ENCODE measurements at regions of chr15 and their contacts with region 1.

Region 1: DNA sequence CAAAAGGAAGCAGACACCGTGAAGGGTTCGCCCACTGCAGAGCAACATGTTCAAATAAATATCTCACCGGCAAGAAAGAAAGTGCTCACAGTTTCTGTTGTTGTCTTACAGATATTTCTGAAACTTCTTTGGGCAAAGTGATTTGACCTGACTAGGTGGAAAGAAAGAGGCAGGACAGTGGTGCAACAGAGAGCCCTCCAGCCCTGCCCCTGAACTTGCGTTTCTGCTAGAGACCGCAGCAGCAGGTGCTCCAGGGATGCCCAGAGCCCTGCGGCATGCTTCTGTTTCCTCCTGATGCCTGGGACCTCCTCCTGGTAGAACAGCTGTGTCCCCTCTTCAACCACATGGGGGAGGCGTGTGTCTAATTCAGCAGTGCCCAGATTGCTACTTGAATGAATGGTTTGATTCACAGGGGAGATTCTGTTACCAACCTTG is 123.4 kb downstream of the ATP10A start:
- H3K4me3 Mint-ChIP-seq: no peak overlapping the region
- H3K27ac Mint-ChIP-seq: no peak overlapping the region
- H3K4me1 Mint-ChIP-seq: peaks cover 30% of the 10 kb centered on the region
- H3K27me3 Mint-ChIP-seq: peaks cover 22% of the 10 kb centered on the region

Region 2: DNA sequence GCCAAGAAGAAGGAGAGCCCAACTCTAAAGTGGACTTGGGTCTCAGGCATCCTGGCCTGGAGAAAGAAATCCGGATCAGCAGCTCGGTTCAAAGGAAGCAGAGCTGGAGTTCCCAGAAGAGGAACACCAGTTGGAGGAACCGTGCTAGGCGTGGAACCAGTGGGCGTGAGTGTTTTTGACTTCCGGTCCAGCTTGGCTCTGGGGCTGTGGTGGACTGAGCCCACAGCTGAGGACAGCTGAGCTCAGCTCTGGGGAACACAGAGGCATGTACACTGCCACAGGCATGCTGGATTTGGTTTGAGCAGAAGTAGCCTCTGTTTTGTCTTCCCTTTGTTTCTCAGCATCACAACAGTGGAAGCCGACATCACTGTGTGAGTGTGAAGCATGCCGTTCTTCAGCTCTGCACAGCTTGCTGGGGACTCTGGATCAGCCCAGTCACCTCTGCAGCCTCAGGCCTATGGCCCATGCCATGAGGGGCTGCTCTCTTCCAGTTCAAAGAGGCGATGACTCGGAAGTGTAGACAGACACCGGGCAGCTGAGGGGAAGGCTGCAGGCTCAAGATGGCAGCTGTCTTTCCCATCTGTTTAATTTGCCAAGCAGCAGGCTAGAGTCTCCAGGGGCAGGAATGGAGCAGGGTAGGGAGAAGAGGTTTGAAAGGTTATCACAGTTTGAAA is 115.1 kb before region 1 on chr15:
- intact Hi-C with region 1: no loop called
- H3K4me3 Mint-ChIP-seq: no peak overlapping the region
- H3K27ac Mint-ChIP-seq: no peak overlapping the region
- H3K4me1 Mint-ChIP-seq: no peaks in the 10 kb centered on the region
- H3K27me3 Mint-ChIP-seq: no peaks in the 10 kb centered on the region

Region 3: GRCh38 chr15:25775317-25775912 is 35.7 kb after region 1 on chr15:
- intact Hi-C with region 1: loop called (anchors 5 kb)
- H3K4me3 Mint-ChIP-seq: no peak overlapping the region
- H3K27ac Mint-ChIP-seq: no peak overlapping the region
- H3K4me1 Mint-ChIP-seq: peaks cover 58% of the 10 kb centered on the region
- H3K27me3 Mint-ChIP-seq: no peaks in the 10 kb centered on the region

Region 4: GRCh38 chr15:25811481-25811906 is 71.8 kb after region 1 on chr15:
- intact Hi-C with region 1: loop called (anchors 10 kb)
- H3K4me3 Mint-ChIP-seq: no peak overlapping the region
- H3K27ac Mint-ChIP-seq: peak overlapping the region; percentile 58
- H3K4me1 Mint-ChIP-seq: peaks cover 15% of the 10 kb centered on the region
- H3K27me3 Mint-ChIP-seq: peaks cover 38% of the 10 kb centered on the region

Region 5: GRCh38 chr15:25852661-25853524 is 113.2 kb after region 1 on chr15:
- intact Hi-C with region 1: no loop called
- H3K4me3 Mint-ChIP-seq: no peak overlapping the region
- H3K27ac Mint-ChIP-seq: peak overlapping the region; percentile 99
- H3K4me1 Mint-ChIP-seq: peaks cover 55% of the 10 kb centered on the region
- H3K27me3 Mint-ChIP-seq: no peaks in the 10 kb centered on the region

Measured in dendritic cell treated with granulocyte-macrophage colony-stimulating factor and Interleukin-4, amounts not matched to agents 40 ng/mL and 50 ng/mL, for 4 days (primary cell).